Spleen (tissue), 13 donors: ENCODE measurements at regions of chr14 and their contacts with region 1.

Region 1: GRCh38 chr14:80987235-80988032 is 32.0 kb downstream of the TSHR start:
- DNase-seq: no peak
- H3K4me3 ChIP-seq: no peak overlapping the region
- H3K27ac ChIP-seq: no peak overlapping the region
- H3K4me1 ChIP-seq: peaks cover 0 to 8% (median 1%) of the 10 kb centered on the region in 6 donors
- H3K27me3 ChIP-seq: peaks cover 0 to 14% (median 0%) of the 10 kb centered on the region in 7 donors
- CTCF ChIP-seq: peak; percentile 44 to 92 (median 86)
- POLR2A ChIP-seq: no peak

Region 2: GRCh38 chr14:80954687-80955299 is 32.6 kb before region 1 on chr14:
- intact Hi-C with region 1: loop called (anchors 5 kb)
- DNase-seq: peak; percentile 94
- H3K4me3 ChIP-seq: peak overlapping the region; percentile 31 to 71 (median 47)
- H3K27ac ChIP-seq: peak overlapping the region in 3 of 8 donors; percentile 21 to 47 (median 30)
- H3K4me1 ChIP-seq: peaks cover 7 to 53% (median 33%) of the 10 kb centered on the region in 6 donors
- H3K27me3 ChIP-seq: peaks cover 0 to 10% (median 0%) of the 10 kb centered on the region in 7 donors
- CTCF ChIP-seq: peak; percentile 48 to 87 (median 78)
- POLR2A ChIP-seq: no peak

Region 3: GRCh38 chr14:81062816-81063215 is 75.4 kb after region 1 on chr14:
- intact Hi-C with region 1: no loop called
- DNase-seq: no peak
- H3K4me3 ChIP-seq: no peak overlapping the region
- H3K27ac ChIP-seq: no peak overlapping the region
- H3K4me1 ChIP-seq: no peaks in the 10 kb centered on the region
- H3K27me3 ChIP-seq: peaks cover 0 to 3% (median 0%) of the 10 kb centered on the region in 7 donors
- CTCF ChIP-seq: peak in 6 of 11 experiments; percentile 12 to 35 (median 22)
- POLR2A ChIP-seq: no peak

Region 4: DNA sequence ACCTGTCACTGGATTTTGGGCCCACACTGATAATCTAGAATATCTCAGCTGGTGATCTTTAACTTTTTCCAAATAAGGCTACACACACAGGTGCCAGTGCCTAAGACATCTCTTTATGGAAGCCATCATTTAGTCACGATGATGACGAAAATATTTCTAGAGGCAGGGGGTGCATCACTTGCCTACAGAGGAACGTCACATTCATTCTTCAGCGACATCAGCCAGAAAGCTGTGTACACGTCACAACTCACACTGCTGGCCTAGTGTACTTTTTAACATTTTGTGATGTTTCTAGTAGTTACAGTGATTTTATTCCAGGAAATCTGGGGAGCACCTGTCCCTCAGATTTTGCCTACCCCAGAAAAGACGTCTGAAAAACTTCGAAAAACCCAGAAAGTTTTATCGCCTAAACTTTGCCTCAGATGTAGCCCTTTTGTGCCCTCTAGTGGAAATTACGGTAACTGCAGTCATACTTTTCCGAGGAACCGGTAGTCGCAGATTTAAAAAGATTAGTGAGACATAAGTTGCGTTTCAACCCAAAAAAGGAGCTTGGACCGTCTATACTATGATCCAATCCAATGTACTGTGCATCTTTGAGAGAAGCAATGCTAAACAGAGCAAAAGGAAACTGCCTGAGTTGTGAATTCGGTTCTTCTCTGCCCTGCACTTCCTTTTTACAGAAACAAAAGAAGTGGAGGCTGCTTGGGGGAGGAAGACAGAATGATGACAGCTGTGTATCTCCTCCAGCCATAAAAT is 477.0 kb after region 1 on chr14:
- intact Hi-C with region 1: loop called (anchors 5 kb)
- DNase-seq: no peak
- H3K4me3 ChIP-seq: peak overlapping the region in 7 of 8 donors; percentile 27 to 63 (median 43)
- H3K27ac ChIP-seq: peak overlapping the region; percentile 73 to 83 (median 79)
- H3K4me1 ChIP-seq: peaks cover 0 to 16% (median 4%) of the 10 kb centered on the region in 6 donors
- H3K27me3 ChIP-seq: no peaks in the 10 kb centered on the region
- CTCF ChIP-seq: peak; percentile 78 to 94 (median 90)
- POLR2A ChIP-seq: no peak